ENCODE measurements at regions of chr20 and their contacts with region 1.

Region 1: DNA sequence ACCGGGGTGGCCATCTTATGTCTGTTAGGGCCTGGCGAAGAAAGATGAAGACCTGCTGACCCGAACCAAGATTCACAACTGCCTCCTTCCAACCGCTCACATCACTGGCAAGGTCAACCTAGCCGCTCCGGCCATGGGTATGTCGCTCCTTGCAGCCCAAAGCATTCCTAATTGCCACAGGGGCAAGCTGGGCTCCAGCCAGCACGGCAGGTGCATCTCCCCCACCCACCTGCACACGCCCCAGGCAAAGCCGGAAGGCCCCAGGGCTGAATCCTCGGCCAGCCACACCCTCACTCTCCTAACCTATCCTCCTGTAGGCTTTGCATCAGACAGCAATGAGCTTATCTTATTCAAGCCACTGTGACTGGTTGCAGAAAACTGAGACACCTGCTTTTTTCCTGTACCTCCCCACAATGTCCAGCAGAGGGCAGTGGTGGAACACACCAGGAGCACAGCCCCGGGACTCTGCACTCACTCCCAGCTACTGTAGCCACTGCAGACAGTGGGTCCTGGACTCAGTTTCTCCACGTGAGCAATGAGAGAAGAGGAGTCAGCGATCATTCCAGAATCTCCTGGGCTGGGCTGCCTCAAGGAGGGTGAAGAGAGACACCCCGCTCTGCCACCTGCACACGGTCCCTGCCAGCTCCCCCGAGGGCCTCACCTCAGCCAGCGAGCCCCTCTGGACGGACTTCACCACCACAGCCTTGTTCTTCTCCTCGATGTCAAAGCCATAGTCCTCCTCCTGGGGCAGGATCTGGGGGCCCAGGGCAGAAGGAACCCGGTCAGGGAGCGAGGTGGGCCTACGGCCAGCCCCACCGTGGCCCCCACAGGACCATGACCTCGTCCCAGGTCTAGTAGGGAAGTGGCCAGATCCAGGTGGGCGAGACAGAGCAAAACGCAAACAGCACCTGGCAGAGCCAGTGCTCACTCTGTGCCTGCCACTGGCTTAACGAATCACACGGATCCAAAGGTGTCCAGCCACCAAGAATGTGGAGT is 170.0 kb downstream of the PREX1 start:
- DNase-seq: peak; percentile 88
- H3K4me3 Mint-ChIP-seq: no peak overlapping the region
- H3K27ac Mint-ChIP-seq: no peak overlapping the region
- H3K4me1 Mint-ChIP-seq: peaks cover 19% of the 10 kb centered on the region
- H3K27me3 Mint-ChIP-seq: peaks cover 51% of the 10 kb centered on the region
- CTCF ChIP-seq: peak; percentile 96

Region 2: GRCh38 chr20:48609491-48609978 is 48.2 kb before region 1 on chr20:
- CTCF ChIA-PET with region 1: no interaction called
- POLR2A ChIA-PET with region 1: no interaction called
- intact Hi-C with region 1: no loop called
- DNase-seq: no peak
- H3K4me3 Mint-ChIP-seq: no peak overlapping the region
- H3K27ac Mint-ChIP-seq: no peak overlapping the region
- H3K4me1 Mint-ChIP-seq: peaks cover 4% of the 10 kb centered on the region
- H3K27me3 Mint-ChIP-seq: peaks cover 62% of the 10 kb centered on the region
- CTCF ChIP-seq: no peak

Region 3: DNA sequence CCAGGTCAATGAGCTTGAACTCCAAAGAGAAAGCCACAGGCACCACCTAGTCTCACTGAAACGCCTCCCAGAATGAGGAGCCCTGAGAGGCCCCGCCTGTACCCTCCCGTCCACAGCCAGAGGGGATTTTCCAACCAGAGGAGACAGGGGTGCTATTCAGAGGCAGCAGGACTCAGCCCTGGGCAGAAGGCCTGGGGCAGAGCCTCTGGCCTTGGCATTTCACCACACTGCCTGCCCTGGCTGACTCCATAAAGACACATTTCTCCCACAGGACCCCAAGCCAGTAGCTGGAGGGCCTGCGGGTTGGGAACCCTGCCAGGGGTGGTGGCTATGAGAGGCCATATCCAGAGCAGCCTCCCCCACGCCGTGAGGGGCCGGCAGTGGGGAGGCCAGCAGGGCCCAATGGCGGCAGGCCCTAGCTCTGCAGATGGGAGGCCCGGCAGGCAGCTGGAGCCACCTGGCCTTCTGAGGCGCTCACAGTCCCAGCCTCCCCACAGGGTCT is 10.7 kb after region 1 on chr20:
- CTCF ChIA-PET with region 1: interaction called, 15 read pairs
- POLR2A ChIA-PET with region 1: no interaction called
- intact Hi-C with region 1: no loop called
- DNase-seq: no peak
- H3K4me3 Mint-ChIP-seq: no peak overlapping the region
- H3K27ac Mint-ChIP-seq: no peak overlapping the region
- H3K4me1 Mint-ChIP-seq: no peaks in the 10 kb centered on the region
- H3K27me3 Mint-ChIP-seq: peaks cover 49% of the 10 kb centered on the region
- CTCF ChIP-seq: no peak

Region 4: DNA sequence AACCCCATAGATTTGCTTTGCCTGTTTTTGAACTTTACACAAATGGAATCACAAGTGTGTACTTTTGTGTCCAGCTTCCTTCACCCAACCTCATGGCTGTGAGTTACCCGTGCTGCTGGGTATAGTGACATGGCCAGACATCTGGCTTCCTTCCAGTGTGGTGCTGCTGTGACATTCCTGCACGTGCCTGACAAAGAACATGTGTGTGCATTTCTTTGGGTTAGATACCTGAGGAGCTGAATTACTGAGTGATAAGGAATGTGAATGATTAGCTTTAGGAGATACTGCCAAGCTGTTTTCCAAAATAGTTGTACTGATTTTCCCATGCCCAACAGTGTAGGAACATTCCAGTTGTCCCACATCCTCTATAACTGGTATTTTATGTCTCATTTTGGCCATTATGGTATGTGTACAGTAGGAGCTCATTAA is 37.4 kb after region 1 on chr20:
- CTCF ChIA-PET with region 1: interaction called, 14 read pairs
- POLR2A ChIA-PET with region 1: no interaction called
- intact Hi-C with region 1: no loop called
- DNase-seq: no peak
- H3K4me3 Mint-ChIP-seq: no peak overlapping the region
- H3K27ac Mint-ChIP-seq: no peak overlapping the region
- H3K4me1 Mint-ChIP-seq: peaks cover 17% of the 10 kb centered on the region
- H3K27me3 Mint-ChIP-seq: no peaks in the 10 kb centered on the region
- CTCF ChIP-seq: no peak

Region 5: DNA sequence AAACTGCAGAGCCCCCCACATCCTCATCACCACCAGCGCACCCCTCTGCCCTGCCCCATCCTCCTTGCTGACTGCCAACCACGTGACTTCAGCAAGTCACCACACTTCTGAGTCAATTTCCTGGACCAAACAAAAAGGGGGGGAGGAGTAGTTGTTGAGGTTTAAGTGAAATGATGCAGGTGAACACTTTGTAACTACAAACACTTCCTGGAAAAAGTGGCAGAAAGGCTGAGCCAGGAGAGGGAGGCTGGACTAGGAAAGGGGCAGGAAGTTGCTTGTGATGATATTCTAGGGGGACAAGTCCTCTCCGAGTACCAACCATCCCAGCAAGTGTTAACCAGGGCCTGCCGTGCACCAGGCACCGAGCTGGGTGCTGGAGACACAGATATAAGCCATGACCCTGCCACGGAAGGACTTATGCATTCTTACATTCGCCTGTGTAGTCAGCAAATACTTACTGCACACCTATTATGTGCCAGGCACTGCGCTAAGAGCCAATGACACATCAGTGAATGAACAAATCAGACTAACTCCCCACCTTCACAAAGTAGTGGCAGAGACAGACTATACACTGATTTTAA is 102.7 kb after region 1 on chr20:
- CTCF ChIA-PET with region 1: no interaction called
- POLR2A ChIA-PET with region 1: no interaction called
- intact Hi-C with region 1: no loop called
- DNase-seq: peak; percentile 51
- H3K4me3 Mint-ChIP-seq: no peak overlapping the region
- H3K27ac Mint-ChIP-seq: no peak overlapping the region
- H3K4me1 Mint-ChIP-seq: peaks cover 11% of the 10 kb centered on the region
- H3K27me3 Mint-ChIP-seq: no peaks in the 10 kb centered on the region
- CTCF ChIP-seq: no peak

Region 6: DNA sequence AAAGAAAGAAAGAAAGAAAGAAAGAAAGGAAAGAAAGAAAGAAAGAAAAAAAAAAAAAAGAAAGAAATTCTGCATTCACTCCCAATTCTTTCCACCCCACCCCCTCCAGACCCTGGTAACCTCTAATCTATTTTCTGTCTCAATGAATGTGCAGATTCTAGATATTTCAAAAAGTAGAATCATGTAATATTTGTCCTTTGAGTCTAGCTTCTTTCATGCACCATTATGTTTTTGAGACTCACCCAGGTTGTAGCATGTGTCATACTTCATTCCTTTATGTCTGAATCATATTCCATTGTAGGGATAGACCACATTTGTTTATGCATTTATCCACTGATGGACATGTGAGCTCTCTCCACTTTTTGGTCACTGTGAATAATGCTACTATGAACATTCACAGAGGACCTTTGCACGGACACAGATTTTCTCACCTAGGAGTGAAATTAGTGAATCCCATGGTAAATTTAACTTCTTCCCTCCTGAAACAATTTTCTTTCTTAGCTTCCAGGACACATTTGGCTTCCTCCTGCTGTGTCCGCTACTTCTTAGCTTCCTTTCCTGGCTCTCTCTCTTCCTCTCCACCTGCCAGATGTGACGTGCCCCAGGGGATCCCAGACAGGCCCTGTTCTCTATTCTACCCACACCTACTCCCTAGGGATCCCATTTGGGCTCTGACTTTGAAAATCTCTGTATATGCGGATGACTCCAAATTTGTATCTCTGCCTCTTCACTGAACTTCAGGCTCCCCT is 239.6 kb after region 1 on chr20:
- CTCF ChIA-PET with region 1: interaction called, 73 read pairs
- POLR2A ChIA-PET with region 1: interaction called, 10 read pairs
- intact Hi-C with region 1: no loop called
- DNase-seq: peak; percentile 70
- H3K4me3 Mint-ChIP-seq: no peak overlapping the region
- H3K27ac Mint-ChIP-seq: peak overlapping the region; percentile 72
- H3K4me1 Mint-ChIP-seq: peaks cover 15% of the 10 kb centered on the region
- H3K27me3 Mint-ChIP-seq: peaks cover 15% of the 10 kb centered on the region
- CTCF ChIP-seq: no peak

Region 7: DNA sequence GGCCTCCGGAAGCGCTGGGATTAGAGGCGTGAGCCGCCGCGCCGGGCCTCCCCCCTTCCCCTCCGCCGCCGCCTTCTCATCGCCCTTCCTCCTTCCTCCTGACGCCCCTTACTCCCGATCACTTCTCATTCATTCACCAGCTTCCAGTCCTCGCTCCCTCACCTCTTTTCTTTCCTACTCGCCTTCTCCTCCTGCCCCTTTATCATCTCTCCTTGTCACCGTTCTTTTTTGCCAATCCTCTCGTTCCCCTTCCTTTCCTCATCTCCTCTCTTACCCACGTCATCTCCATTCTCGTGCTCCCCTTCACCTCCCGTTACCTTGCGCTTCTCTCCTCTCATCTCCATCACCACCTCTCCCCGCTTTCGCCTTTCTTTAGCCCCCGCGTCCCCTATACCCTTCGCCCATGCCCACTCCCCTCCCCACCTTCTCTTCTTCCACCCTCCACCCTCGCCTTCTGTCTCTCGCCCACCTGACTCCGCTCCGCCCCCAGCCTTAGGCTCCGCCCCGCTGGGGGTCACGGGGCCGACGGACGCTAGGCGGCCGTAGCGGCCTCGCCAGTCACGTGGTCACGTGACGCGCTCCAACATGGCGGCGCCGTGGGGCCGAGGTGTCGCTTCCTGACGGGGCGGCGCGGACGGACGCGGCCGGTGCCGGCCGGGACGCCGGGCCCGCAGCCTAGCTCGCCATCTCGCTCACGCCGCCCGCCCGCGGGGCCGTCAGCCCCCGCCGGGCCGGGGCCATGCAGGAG is 263.6 kb after region 1 on chr20 and contains the start of gene ARFGEF2:
- CTCF ChIA-PET with region 1: interaction called, 13 read pairs
- POLR2A ChIA-PET with region 1: interaction called, 6 read pairs
- intact Hi-C with region 1: no loop called
- DNase-seq: peak; percentile 90
- H3K4me3 Mint-ChIP-seq: peak within 1 kb of the TSS; percentile 82
- H3K27ac Mint-ChIP-seq: peak within 1 kb of the TSS; percentile 92
- H3K4me1 Mint-ChIP-seq: peaks cover 24% of the 10 kb centered on the region
- H3K27me3 Mint-ChIP-seq: no peaks in the 10 kb centered on the region
- CTCF ChIP-seq: no peak
- total RNA-seq, gene ARFGEF2: 30.3 and 33.5 TPM in 2 replicates